ENCODE measurements at regions of chr4 and their contacts with region 1.

Region 1: DNA sequence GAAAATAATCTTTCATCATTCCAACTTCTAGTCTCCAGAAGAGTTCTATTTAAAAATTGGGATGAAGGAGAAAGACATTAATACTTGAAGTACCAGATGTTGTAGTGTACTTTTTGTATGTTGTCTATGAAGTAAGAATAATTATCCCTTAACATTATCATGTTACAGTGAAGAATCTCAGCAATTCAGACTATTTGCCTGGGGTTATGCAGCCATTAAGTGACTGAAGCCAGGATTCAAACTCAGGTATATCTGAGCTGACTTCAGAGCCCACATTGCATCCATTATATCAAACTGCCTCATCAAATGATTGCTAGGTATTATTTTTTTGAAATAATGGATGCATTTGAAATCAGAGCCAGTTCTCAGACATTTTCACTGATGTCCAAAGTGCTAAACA is 76.1 kb upstream of the FHDC1 start:
- DNase-seq: no peak
- ATAC-seq: no peak
- H3K4me3 ChIP-seq: no peak overlapping the region
- H3K27ac ChIP-seq: no peak overlapping the region
- H3K4me1 ChIP-seq: no peaks in the 10 kb centered on the region
- H3K27me3 ChIP-seq: no peaks in the 10 kb centered on the region
- CTCF ChIP-seq: no peak
- EP300 ChIP-seq: no peak
- POLR2A ChIP-seq: no peak
- RAD21 ChIP-seq: no peak

Region 2: DNA sequence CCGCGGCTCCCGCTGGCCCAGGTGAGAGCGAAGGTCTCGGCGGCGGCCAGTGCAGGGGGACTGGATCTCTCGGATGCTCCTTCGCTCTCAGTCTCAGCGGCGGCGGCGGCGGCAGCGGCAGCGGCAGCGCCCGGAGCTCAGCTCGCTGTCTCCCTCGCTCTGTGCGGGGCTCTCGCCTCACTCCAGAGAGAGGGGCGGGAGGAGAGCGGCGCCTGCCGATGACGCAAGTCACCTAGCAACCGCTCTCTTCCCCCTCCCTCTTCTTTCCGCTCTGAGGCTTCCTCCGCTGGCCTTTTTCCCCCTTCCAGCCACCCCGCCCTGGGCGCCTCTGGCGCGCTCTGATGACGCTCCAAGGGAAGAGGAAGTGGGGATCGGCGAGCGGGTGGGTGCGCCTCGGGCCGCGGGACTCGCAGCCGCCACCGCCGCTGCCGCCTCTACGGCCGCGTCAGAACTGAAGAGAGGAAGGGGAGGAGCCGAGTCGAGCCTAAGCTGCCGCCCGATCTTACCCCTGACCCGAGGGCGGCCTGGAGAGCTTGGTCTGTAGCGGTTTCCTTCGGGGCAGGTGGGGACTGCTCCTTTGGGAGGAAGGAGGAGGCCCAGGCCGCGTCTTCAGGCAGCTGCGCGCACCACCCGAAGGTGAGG is 324.0 kb before region 1 on chr4 and contains the start of gene FBXW7:
- CTCF ChIA-PET with region 1: no interaction called
- POLR2A ChIA-PET with region 1: no interaction called
- RAD21 ChIA-PET with region 1: no interaction called
- SMC1A ChIA-PET with region 1: no interaction called
- in situ Hi-C with region 1: no loop called
- intact Hi-C with region 1: no loop called
- DNase-seq: peak; percentile 98
- ATAC-seq: peak; percentile 84
- H3K4me3 ChIP-seq: peak within 1 kb of the TSS; percentile 92
- H3K27ac ChIP-seq: peak within 1 kb of the TSS; percentile 96
- H3K4me1 ChIP-seq: peaks cover 21% of the 10 kb centered on the region
- H3K27me3 ChIP-seq: no peaks in the 10 kb centered on the region
- CTCF ChIP-seq: no peak
- EP300 ChIP-seq: peak in 1 of 2 experiments; percentile 75; a peak in 3 of 4 replicates
- POLR2A ChIP-seq: peak; percentile 90
- RAD21 ChIP-seq: no peak
- polyA plus RNA-seq, gene FBXW7: 40.2 to 42.5 TPM

Region 3: DNA sequence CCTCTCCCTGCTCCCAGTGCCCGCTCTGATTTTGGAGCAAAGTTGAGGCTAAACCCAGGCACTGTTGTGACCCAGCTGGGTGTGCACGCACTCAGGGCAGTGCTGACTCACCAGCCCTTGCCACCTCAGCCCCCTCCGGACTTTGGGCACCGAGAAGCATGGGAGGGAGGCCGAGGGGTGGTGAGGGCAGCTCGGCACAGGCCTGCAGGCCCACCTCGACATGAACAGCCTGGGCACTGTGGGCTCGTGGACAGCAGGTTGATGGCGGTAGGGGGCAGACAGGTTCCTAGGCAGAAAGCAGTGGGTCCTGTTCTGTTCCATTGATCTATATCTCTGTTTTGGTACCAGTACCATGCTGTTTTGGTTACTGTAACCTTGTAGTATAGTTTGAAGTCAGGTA is 111.4 kb before region 1 on chr4:
- CTCF ChIA-PET with region 1: no interaction called
- POLR2A ChIA-PET with region 1: interaction called, 11 read pairs
- RAD21 ChIA-PET with region 1: no interaction called
- SMC1A ChIA-PET with region 1: no interaction called
- in situ Hi-C with region 1: no loop called
- intact Hi-C with region 1: no loop called
- DNase-seq: no peak
- ATAC-seq: no peak
- H3K4me3 ChIP-seq: no peak overlapping the region
- H3K27ac ChIP-seq: no peak overlapping the region
- H3K4me1 ChIP-seq: no peaks in the 10 kb centered on the region
- H3K27me3 ChIP-seq: no peaks in the 10 kb centered on the region
- CTCF ChIP-seq: no peak
- EP300 ChIP-seq: no peak
- POLR2A ChIP-seq: no peak
- RAD21 ChIP-seq: no peak

Region 4: GRCh38 chr4:152831416-152831815 is 28.6 kb before region 1 on chr4:
- CTCF ChIA-PET with region 1: no interaction called
- POLR2A ChIA-PET with region 1: no interaction called
- RAD21 ChIA-PET with region 1: no interaction called
- SMC1A ChIA-PET with region 1: no interaction called
- in situ Hi-C with region 1: no loop called
- intact Hi-C with region 1: no loop called
- DNase-seq: no peak
- ATAC-seq: no peak
- H3K4me3 ChIP-seq: no peak overlapping the region
- H3K27ac ChIP-seq: no peak overlapping the region
- H3K4me1 ChIP-seq: no peaks in the 10 kb centered on the region
- H3K27me3 ChIP-seq: no peaks in the 10 kb centered on the region
- CTCF ChIP-seq: no peak
- EP300 ChIP-seq: no peak
- POLR2A ChIP-seq: no peak
- RAD21 ChIP-seq: no peak